Activated T-helper 1 cell treated with anti-CD3 and anti-CD28 coated beads, Interleukin-12 subunit alpha, Interleukin-12 subunit beta, Interleukin-2, Interleukin-4 antibody, amounts not matched to agents 30 ng/mL and 10 ng/mL and 1 ng/mL, durations not matched to agents 14 hours and 24 hours and 36 hours (primary cell): ENCODE measurements at regions of chr5 and their contacts with region 1.

Region 1: GRCh38 chr5:157076558-157076957 is 17.6 kb upstream of the HAVCR1 start:
- DNase-seq: no peak
- H3K4me3 Mint-ChIP-seq: peak overlapping the region; percentile 15
- H3K27ac Mint-ChIP-seq: peak overlapping the region; percentile 53
- H3K4me1 Mint-ChIP-seq: peaks cover 55% of the 10 kb centered on the region
- H3K27me3 Mint-ChIP-seq: no peaks in the 10 kb centered on the region

Region 2: GRCh38 chr5:157004893-157005551 is 71.5 kb before region 1 on chr5:
- intact Hi-C with region 1: loop called (anchors 2 kb)
- DNase-seq: no peak
- H3K4me3 Mint-ChIP-seq: peak overlapping the region; percentile 7
- H3K27ac Mint-ChIP-seq: peak overlapping the region; percentile 76
- H3K4me1 Mint-ChIP-seq: peaks cover 46% of the 10 kb centered on the region
- H3K27me3 Mint-ChIP-seq: no peaks in the 10 kb centered on the region

Region 3: DNA sequence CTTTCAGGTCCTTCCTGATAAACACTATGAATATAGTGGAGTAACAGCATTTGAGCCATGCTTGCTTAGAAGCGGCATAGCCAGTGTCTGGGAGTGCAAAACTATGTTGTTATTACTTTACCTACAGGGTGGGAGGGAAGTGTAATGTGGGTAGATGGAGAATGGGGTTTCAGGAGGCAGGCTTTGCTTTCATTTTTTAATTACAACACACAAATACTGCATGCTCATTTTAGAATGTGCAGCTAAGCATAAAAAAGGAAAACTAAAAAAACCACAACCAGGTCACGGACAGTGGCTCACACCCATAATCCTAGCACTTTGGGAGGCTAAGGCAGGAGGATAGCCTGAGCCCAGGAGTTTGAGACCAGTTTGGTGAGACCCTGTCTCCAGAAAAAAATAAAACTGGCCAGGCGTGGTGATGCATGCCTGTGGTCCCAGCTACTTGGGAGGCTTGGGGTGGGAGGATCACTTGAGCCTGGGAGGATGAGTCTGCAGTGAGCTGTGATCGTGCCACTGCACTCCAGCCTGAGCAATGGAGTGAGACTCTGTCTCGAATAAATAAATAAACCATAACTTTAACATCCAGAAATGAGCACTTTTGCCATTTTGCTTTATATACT is 37.9 kb before region 1 on chr5:
- intact Hi-C with region 1: loop called (anchors 2 kb)
- DNase-seq: no peak
- H3K4me3 Mint-ChIP-seq: no peak overlapping the region
- H3K27ac Mint-ChIP-seq: peak overlapping the region; percentile 74
- H3K4me1 Mint-ChIP-seq: peaks cover 37% of the 10 kb centered on the region
- H3K27me3 Mint-ChIP-seq: no peaks in the 10 kb centered on the region

Region 4: GRCh38 chr5:157059891-157060290 is 16.7 kb before region 1 on chr5:
- intact Hi-C with region 1: loop called (anchors 1 kb)
- DNase-seq: no peak
- H3K4me3 Mint-ChIP-seq: no peak overlapping the region
- H3K27ac Mint-ChIP-seq: no peak overlapping the region
- H3K4me1 Mint-ChIP-seq: peaks cover 8% of the 10 kb centered on the region
- H3K27me3 Mint-ChIP-seq: no peaks in the 10 kb centered on the region

Region 5: DNA sequence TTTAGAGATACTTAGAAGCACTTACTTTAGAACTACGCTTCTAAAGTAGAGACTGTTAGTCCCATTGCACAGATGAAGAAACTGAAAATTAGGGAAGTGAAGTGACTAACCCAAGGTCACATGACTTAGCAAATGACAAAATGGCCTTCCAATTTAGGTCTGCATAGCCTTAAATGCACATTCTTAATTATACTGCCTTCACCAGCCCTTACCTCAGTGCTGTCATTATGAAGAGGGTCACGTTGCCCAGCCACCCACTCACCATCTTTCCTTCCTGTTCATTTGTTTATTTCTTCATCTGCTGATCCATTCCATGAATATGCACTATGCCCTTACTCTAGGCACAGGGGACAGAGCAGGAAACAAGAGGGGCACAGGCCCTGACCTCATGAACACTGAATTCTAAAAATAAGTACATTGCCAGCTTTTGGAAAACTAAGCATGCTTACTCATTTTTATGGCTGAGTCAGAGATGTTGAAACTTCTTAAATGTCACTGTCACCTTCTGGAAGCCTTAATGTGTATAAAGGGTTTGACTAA is 23.7 kb after region 1 on chr5:
- intact Hi-C with region 1: loop called (anchors 2 kb)
- DNase-seq: no peak
- H3K4me3 Mint-ChIP-seq: peak overlapping the region; percentile 54
- H3K27ac Mint-ChIP-seq: peak overlapping the region; percentile 95
- H3K4me1 Mint-ChIP-seq: peaks cover 50% of the 10 kb centered on the region
- H3K27me3 Mint-ChIP-seq: no peaks in the 10 kb centered on the region

Region 6: GRCh38 chr5:157108976-157109375 is 32.4 kb after region 1 on chr5 and contains the start of gene HAVCR2:
- intact Hi-C with region 1: loop called (anchors 1 kb)
- DNase-seq: peak; percentile 65
- H3K4me3 Mint-ChIP-seq: peak within 1 kb of the TSS; percentile 91
- H3K27ac Mint-ChIP-seq: peak within 1 kb of the TSS; percentile 94
- H3K4me1 Mint-ChIP-seq: peaks cover 63% of the 10 kb centered on the region
- H3K27me3 Mint-ChIP-seq: no peaks in the 10 kb centered on the region
- total RNA-seq, gene HAVCR2: 128 and 129 TPM in 2 replicates